ENCODE measurements at regions of chr6 and their contacts with region 1.

Region 1: GRCh38 chr6:117602151-117602898 is at the start of gene GOPC:
- DNase-seq: peak; percentile 91 to 98
- H3K4me3 ChIP-seq: peak within 1 kb of the TSS; percentile 93
- H3K27ac ChIP-seq: peak within 1 kb of the TSS; percentile 80 to 89
- H3K4me1 ChIP-seq: peaks cover 0 to 14% of the 10 kb centered on the region in 2 donors
- H3K27me3 ChIP-seq: no peaks in the 10 kb centered on the region
- CTCF ChIP-seq: peak; percentile 6 to 24 (median 9)
- total RNA-seq, gene GOPC: 12.5 TPM

Region 2: GRCh38 chr6:117346142-117346930 is 256.0 kb before region 1 on chr6:
- intact Hi-C with region 1: loop called (anchors 1 kb)
- DNase-seq: no peak
- H3K4me3 ChIP-seq: peak overlapping the region in 1 of 2 donors; percentile 47
- H3K27ac ChIP-seq: no peak overlapping the region
- H3K4me1 ChIP-seq: no peaks in the 10 kb centered on the region
- H3K27me3 ChIP-seq: no peaks in the 10 kb centered on the region
- CTCF ChIP-seq: peak in 2 of 3 experiments; percentile 49 to 55

Region 3: DNA sequence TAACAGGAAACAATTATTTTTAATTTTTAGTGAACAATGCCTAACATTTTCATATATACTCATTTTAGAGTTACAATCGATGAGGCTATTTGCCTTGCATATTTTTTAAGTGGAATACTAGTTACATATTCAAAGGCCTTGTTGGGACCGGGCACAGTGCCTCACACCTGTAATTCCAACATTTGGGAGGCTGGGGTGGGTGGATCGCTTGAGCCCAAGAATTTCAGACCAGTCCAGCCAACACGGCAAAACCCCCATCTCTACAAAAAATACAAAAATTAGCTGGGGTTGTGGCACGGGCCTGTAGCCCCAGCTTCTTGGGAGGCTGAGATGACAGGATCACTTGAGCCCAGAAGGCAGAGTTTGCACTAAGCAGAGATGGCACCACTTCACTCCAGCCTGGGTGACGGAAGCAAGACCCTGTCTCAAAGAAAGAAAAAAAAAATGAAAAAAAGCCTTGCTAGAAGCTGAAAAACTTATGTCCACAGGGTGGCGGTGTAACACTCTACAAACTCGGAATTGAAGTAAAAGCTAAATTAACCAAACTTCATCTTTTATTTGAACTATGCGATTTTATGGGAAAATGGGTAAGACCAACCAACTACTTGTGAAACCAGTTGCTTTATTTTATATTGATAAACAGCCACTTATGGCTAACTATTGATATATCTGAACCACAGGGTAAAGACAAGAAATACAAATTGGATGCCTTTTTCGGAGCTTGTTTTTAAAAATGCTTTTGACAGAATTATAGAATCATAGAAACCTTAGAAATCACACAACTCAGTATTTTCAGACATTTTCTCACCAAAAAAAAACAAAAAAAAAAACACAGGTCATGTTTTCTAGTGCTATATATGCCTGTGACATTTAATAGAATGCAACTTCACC is 152.5 kb before region 1 on chr6:
- intact Hi-C with region 1: loop called (anchors 1 kb)
- DNase-seq: peak in 1 of 2 donors; percentile 76
- H3K4me3 ChIP-seq: peak overlapping the region in 1 of 2 donors; percentile 3
- H3K27ac ChIP-seq: peak overlapping the region; percentile 56 to 63
- H3K4me1 ChIP-seq: peaks cover 0 to 13% of the 10 kb centered on the region in 2 donors
- H3K27me3 ChIP-seq: no peaks in the 10 kb centered on the region
- CTCF ChIP-seq: peak; percentile 53 to 81 (median 76)

Region 4: DNA sequence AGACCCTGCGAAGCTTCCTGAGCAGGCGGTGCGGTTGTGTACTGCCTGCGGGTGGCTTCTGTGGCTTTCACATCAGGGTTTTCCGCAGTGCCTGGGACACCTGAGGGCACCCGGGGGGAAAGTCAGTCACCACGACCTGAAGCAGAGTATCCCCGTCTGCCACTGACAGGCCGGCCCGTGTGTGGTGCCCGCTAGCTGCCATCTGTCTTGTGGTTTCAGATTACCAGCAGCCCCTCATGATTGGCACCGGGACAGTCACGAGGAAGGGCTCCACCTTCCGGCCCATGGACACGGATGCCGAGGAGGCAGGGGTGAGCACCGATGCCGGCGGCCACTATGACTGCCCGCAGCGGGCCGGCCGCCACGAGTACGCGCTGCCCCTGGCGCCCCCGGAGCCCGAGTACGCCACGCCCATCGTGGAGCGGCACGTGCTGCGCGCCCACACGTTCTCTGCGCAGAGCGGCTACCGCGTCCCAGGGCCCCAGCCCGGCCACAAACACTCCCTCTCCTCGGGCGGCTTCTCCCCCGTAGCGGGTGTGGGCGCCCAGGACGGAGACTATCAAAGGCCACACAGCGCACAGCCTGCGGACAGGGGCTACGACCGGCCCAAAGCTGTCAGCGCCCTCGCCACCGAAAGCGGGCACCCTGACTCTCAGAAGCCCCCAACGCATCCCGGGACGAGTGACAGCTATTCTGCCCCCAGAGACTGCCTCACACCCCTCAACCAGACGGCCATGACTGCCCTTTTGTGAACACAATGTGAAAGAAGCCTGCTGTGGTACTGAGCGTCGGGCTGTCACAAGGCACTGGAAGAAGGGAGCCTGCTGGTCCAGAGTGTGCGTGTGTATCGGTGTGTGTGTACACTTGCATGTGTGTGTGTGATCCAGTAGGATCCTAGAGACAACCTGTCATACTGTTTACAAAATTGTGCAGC is 54.4 kb before region 1 on chr6:
- intact Hi-C with region 1: loop called (anchors 5 kb)
- DNase-seq: peak; percentile 39 to 86
- H3K4me3 ChIP-seq: peak overlapping the region; percentile 50 to 66
- H3K27ac ChIP-seq: peak overlapping the region; percentile 75 to 85
- H3K4me1 ChIP-seq: peaks cover 2 to 12% of the 10 kb centered on the region in 2 donors
- H3K27me3 ChIP-seq: no peaks in the 10 kb centered on the region
- CTCF ChIP-seq: peak in 2 of 3 experiments; percentile 26

Region 5: GRCh38 chr6:118187568-118188164 is 585.3 kb after region 1 on chr6:
- intact Hi-C with region 1: loop called (anchors 2 kb)
- DNase-seq: peak in 1 of 2 donors; percentile 64
- H3K4me3 ChIP-seq: peak overlapping the region in 1 of 2 donors; percentile 21
- H3K27ac ChIP-seq: peak overlapping the region; percentile 37 to 59
- H3K4me1 ChIP-seq: peaks cover 0 to 11% of the 10 kb centered on the region in 2 donors
- H3K27me3 ChIP-seq: no peaks in the 10 kb centered on the region
- CTCF ChIP-seq: no peak

Measured in ascending aorta (tissue), 2 donors.